GM12878 (cell line): ENCODE measurements at regions of chr5 and their contacts with region 1.

Region 1: GRCh38 chr5:142167458-142167857 is 58.9 kb downstream of the NDFIP1 start:
- DNase-seq: no peak
- ATAC-seq: no peak
- H3K4me3 ChIP-seq: no peak overlapping the region
- H3K27ac ChIP-seq: no peak overlapping the region
- H3K4me1 ChIP-seq: no peaks in the 10 kb centered on the region
- H3K27me3 ChIP-seq: no peaks in the 10 kb centered on the region; a peak in 2 of 4 replicates
- CTCF ChIP-seq: no peak
- EP300 ChIP-seq: no peak
- POLR2A ChIP-seq: no peak
- RAD21 ChIP-seq: no peak

Region 2: DNA sequence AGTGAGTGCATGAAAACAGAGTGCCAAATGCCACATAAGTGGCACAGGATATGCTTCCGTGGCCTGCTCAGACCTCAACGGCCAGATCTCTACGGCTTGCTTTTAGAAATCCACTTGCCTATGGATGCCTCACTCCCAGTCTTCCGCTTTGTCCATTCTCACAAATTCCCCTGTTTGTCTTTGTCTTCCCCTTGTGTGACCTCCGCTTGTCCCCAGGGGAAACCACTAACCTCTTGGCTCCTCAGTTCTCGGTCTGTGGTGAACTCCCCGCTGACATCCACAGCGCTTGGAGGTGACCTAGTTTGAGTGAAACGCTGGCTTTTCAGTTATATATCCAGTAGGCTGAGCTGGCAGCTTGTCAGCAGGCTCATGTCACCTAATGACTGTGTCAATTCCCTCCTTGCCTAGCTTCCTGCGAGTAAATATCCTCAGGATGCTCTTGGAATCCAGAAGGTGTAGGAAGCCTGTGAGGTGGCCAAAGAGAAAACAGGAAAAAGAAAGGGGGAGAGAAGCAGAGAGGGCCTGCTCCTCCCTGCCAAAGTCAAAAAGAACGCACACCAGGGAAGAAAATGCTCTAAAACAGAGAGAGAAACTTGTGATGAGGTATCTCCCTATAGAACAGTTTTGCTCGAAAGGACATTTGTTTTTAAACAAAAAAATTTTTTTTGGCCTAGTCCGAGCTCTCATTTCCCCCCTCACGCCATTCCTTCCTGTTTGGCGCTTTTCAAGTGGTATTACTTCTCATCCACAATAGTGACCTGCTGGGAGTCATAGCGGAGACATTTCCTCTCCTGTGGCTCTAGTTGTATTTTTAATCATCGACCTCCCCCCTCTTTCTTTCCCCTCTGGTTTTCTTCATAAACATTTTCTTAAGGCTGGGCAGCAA is 258.9 kb after region 1 on chr5:
- CTCF ChIA-PET with region 1: interaction called, 3 read pairs
- POLR2A ChIA-PET with region 1: no interaction called
- RAD21 ChIA-PET with region 1: no interaction called
- SMC1A ChIA-PET with region 1: no interaction called
- in situ Hi-C with region 1: no loop called
- intact Hi-C with region 1: loop called (anchors 10 kb)
- DNase-seq: no peak
- ATAC-seq: no peak
- H3K4me3 ChIP-seq: no peak overlapping the region
- H3K27ac ChIP-seq: no peak overlapping the region
- H3K4me1 ChIP-seq: peaks cover 4% of the 10 kb centered on the region; the same call in 1 of the 2 replicates
- H3K27me3 ChIP-seq: no peaks in the 10 kb centered on the region
- CTCF ChIP-seq: no peak
- EP300 ChIP-seq: no peak
- POLR2A ChIP-seq: no peak
- RAD21 ChIP-seq: no peak